ENCODE measurements at regions of chr7 and their contacts with region 1.

Region 1: GRCh38 chr7:128425850-128426249 is 16.1 kb upstream of the IMPDH1 start:
- DNase-seq: peak; percentile 73
- ATAC-seq: peak; percentile 57
- H3K4me3 ChIP-seq: no peak overlapping the region
- H3K27ac ChIP-seq: no peak overlapping the region
- H3K4me1 ChIP-seq: peaks cover 8% of the 10 kb centered on the region
- H3K27me3 ChIP-seq: no peaks in the 10 kb centered on the region
- CTCF ChIP-seq: peak; percentile 87

Region 2: GRCh38 chr7:128347647-128348097 is 78.2 kb before region 1 on chr7:
- CTCF ChIA-PET with region 1: interaction called, 8 read pairs
- POLR2A ChIA-PET with region 1: no interaction called
- intact Hi-C with region 1: loop called (anchors 1 kb)
- DNase-seq: peak; percentile 73
- ATAC-seq: peak; percentile 66
- H3K4me3 ChIP-seq: no peak overlapping the region
- H3K27ac ChIP-seq: no peak overlapping the region
- H3K4me1 ChIP-seq: no peaks in the 10 kb centered on the region
- H3K27me3 ChIP-seq: no peaks in the 10 kb centered on the region
- CTCF ChIP-seq: peak; percentile 87

Region 3: DNA sequence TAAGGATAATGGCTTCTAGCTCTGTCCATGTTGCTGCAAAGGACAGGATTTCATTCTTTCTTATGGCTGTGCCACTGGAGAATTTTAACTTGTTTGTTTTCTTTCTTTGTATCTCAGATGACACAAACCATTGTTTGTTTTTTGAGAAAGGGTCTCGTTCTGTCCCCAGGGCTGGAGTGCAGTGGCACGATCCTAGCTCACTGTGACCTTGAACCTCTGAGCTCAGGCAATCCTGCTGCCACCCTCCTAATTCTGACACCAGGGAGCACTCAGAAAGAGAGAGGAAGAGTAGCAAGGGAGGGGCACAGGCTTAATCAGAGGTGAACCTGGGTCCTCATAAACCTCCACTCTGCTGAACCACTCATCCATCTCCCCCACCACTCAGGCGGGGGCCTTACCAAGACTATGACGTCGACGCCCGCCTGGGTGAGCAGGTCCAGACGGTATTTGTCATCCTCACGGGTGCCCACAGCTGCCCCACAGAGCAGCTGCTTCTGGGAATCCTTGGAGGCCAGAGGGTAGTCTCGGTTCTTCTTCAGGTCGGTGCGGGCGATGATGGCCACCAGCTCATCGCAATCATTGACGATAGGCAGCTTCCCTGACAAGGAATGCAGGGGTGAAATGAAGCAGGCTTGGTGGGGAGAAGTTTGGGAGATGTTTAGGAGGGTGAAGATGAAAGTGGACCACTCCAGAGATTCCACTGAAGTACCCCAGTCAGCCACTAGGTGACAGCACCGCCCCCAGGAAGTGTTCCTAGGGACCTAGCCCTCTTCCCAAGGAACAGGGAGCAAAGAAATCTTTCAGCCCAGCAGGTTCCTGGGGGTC is 27.6 kb before region 1 on chr7:
- CTCF ChIA-PET with region 1: interaction called, 8 read pairs
- POLR2A ChIA-PET with region 1: no interaction called
- intact Hi-C with region 1: loop called (anchors 1 kb)
- DNase-seq: peak; percentile 65
- ATAC-seq: peak; percentile 82
- H3K4me3 ChIP-seq: no peak overlapping the region
- H3K27ac ChIP-seq: no peak overlapping the region
- H3K4me1 ChIP-seq: no peaks in the 10 kb centered on the region
- H3K27me3 ChIP-seq: no peaks in the 10 kb centered on the region
- CTCF ChIP-seq: peak; percentile 86

Region 4: DNA sequence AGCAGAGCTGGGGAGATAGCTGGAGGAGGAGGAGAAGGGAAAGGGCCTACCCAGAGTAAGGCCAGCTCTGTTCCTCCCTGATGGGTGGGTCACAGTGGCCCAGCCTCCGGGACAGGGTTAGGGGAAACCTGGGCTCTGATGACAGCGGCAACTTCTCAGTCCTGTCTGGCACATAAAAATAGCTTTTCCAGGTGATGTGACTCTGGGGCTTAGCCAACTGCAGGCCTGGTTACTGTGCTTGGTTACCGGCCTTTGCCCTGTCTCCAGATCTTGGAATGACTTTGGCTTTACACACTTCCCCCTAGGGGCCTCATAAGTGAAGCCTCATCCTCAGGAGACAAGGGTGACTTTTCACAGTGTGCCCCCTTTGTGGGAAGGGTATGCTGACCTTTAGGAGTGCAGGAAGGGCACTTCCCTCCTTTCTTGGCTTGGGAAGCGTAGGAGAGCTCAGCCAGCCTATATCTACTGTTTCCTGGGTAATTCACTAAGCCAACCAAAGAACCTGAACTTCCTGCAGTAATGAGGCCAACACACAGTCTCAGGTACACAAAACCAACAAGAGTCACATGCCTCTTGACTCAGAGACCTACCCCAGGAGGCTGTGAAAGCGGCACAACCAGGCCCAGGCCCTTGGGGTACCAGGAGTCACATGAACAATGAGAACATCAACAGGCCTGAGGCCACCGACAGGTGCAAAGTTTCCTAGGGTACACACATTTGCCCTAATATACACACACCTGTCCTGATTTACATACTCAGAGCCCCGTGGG is 18.2 kb after region 1 on chr7:
- CTCF ChIA-PET with region 1: interaction called, 10 read pairs
- POLR2A ChIA-PET with region 1: no interaction called
- intact Hi-C with region 1: no loop called
- DNase-seq: no peak
- ATAC-seq: 0 out of 2 replicates have a peak, but pooled peaks have one; percentile 27
- H3K4me3 ChIP-seq: no peak overlapping the region
- H3K27ac ChIP-seq: no peak overlapping the region
- H3K4me1 ChIP-seq: no peaks in the 10 kb centered on the region
- H3K27me3 ChIP-seq: no peaks in the 10 kb centered on the region
- CTCF ChIP-seq: no peak

Region 5: GRCh38 chr7:128459394-128459878 is 33.6 kb after region 1 on chr7:
- CTCF ChIA-PET with region 1: interaction called, 65 read pairs
- POLR2A ChIA-PET with region 1: no interaction called
- intact Hi-C with region 1: loop called (anchors 1 kb)
- DNase-seq: peak; percentile 63
- ATAC-seq: peak; percentile 22
- H3K4me3 ChIP-seq: no peak overlapping the region
- H3K27ac ChIP-seq: no peak overlapping the region
- H3K4me1 ChIP-seq: peaks cover 28% of the 10 kb centered on the region
- H3K27me3 ChIP-seq: no peaks in the 10 kb centered on the region
- CTCF ChIP-seq: peak; percentile 84